CD4-positive, alpha-beta memory T cell (primary cell): ENCODE measurements at regions of chr4 and their contacts with region 1.

Region 1: DNA sequence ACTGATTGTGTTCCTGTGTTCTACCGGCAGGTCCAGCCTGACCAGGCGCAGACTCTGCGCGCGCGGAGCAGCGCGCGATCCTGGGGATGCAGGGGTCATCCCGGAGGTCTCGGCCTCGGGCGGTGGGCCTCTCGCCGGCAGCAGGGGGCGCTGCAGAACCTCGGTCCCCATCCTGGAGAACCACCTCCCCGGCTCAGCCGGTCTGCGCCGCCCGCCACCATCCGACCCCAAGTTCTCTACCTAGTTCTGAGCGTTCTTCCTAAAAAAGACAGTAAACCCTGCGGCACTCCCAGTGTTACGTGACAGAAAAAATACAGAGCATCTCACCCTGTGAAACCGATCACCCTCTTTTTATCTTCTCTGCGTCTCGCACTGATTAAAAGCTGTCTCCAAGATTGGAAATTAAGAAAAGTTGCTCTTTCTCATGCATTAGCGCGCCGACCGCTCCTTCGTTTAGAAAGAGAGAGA is 1.6 kb downstream of the TRPC3 start:
- DNase-seq: peak; percentile 74 to 82 (median 77)
- H3K4me3 ChIP-seq: peak overlapping the region; percentile 68 to 71
- H3K4me3 Mint-ChIP-seq: peak overlapping the region; percentile 83 to 96 (median 88)
- H3K27ac ChIP-seq: no peak overlapping the region
- H3K27ac Mint-ChIP-seq: peak overlapping the region in 6 of 7 donors; percentile 17 to 77 (median 53)
- H3K4me1 ChIP-seq: peaks cover 21% of the 10 kb centered on the region
- H3K4me1 Mint-ChIP-seq: peaks cover 7 to 23% (median 19%) of the 10 kb centered on the region in 4 donors
- H3K27me3 ChIP-seq: no peaks in the 10 kb centered on the region
- H3K27me3 Mint-ChIP-seq: peaks cover 0 to 12% of the 10 kb centered on the region in 2 donors

Region 2: GRCh38 chr4:121800961-121801714 is 149.1 kb before region 1 on chr4 and contains the start of gene EXOSC9:
- CTCF ChIA-PET with region 1: no interaction called
- POLR2A ChIA-PET with region 1: no interaction called
- intact Hi-C with region 1: loop called (anchors 2 kb)
- DNase-seq: peak; percentile 93 to 96 (median 93)
- H3K4me3 ChIP-seq: peak within 1 kb of the TSS; percentile 74 to 98
- H3K4me3 Mint-ChIP-seq: peak within 1 kb of the TSS; percentile 92 to 100 (median 96)
- H3K27ac ChIP-seq: peak within 1 kb of the TSS; percentile 88
- H3K27ac Mint-ChIP-seq: peak within 1 kb of the TSS; percentile 94 to 100 (median 99)
- H3K4me1 ChIP-seq: peaks cover 50% of the 10 kb centered on the region
- H3K4me1 Mint-ChIP-seq: peaks cover 29 to 52% (median 39%) of the 10 kb centered on the region in 4 donors
- H3K27me3 ChIP-seq: no peaks in the 10 kb centered on the region
- H3K27me3 Mint-ChIP-seq: peaks cover 0 to 3% of the 10 kb centered on the region in 2 donors
- total RNA-seq, gene EXOSC9: 43.0 to 45.4 TPM

Region 3: DNA sequence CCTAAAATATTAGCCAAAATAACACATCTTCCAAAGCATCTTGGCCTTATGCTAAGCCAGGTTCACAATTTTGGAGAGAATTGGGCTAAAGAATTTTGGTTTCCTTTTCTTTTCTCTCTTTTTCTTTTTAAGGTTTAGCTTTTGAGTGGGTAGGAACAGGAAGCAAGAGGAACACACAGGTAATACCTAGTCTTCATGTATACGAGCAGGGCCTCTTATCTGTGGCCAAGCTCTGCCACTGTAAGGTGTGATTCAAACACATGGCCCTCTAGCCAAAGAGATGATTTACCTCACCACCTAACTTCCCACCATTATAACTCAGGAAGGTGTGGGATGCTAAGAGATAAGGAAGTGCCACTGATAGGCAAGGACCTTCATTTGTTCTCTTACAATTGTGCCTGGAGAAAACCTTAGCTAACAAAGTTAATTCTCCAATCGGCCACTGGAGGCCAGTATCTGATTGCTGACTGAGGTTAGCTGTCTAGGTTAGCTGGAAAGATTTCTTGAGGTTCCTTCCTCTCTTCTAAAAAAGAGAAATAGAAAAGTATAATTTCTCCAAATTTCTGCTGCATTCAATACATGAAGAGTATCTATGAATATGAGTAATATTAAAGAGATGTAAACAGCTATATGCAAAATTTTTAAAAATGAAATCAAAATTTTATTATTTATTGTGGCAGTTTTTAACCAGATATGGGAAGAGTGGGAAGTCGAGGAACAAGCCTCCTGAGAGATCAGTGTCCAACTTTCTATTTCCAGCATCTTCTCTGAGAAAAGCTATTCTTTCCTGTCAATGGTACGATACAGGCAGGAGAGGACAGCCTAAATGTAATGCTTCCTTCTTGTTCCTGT is 49.9 kb before region 1 on chr4:
- CTCF ChIA-PET with region 1: interaction called, 16 read pairs
- POLR2A ChIA-PET with region 1: no interaction called
- intact Hi-C with region 1: no loop called
- DNase-seq: peak; percentile 44 to 57 (median 49)
- H3K4me3 ChIP-seq: no peak overlapping the region
- H3K4me3 Mint-ChIP-seq: no peak overlapping the region
- H3K27ac ChIP-seq: no peak overlapping the region
- H3K27ac Mint-ChIP-seq: no peak overlapping the region
- H3K4me1 ChIP-seq: no peaks in the 10 kb centered on the region
- H3K4me1 Mint-ChIP-seq: peaks cover 0 to 8% (median 4%) of the 10 kb centered on the region in 4 donors
- H3K27me3 ChIP-seq: no peaks in the 10 kb centered on the region
- H3K27me3 Mint-ChIP-seq: peaks cover 2 to 7% of the 10 kb centered on the region in 2 donors

Region 4: DNA sequence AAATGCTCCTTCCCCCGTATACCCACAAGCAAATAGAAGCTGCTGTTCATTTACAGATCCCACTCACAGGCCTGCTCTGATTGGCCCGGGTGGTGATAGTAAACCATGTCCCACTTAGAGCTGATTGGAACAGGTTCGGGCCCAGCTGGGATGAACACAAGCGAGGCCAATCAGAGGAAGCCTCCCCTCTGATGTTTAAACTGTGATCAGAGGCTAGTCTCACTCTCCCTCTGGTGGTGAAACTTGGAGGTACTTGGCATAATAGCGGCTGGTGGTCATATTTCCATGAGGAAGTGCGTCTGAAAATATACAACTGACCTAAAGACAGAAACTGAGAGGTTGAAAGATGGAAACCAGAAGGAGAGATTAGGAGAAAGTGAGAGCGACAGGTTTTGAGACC is 53.1 kb after region 1 on chr4:
- CTCF ChIA-PET with region 1: interaction called, 13 read pairs
- POLR2A ChIA-PET with region 1: no interaction called
- intact Hi-C with region 1: loop called (anchors 2 kb)
- DNase-seq: peak in 4 of 5 donors; percentile 3 to 33 (median 16)
- H3K4me3 ChIP-seq: no peak overlapping the region
- H3K4me3 Mint-ChIP-seq: no peak overlapping the region
- H3K27ac ChIP-seq: no peak overlapping the region
- H3K27ac Mint-ChIP-seq: no peak overlapping the region
- H3K4me1 ChIP-seq: no peaks in the 10 kb centered on the region
- H3K4me1 Mint-ChIP-seq: peaks cover 0 to 4% (median 0%) of the 10 kb centered on the region in 4 donors
- H3K27me3 ChIP-seq: no peaks in the 10 kb centered on the region
- H3K27me3 Mint-ChIP-seq: peaks cover 8 to 9% of the 10 kb centered on the region in 2 donors

Region 5: DNA sequence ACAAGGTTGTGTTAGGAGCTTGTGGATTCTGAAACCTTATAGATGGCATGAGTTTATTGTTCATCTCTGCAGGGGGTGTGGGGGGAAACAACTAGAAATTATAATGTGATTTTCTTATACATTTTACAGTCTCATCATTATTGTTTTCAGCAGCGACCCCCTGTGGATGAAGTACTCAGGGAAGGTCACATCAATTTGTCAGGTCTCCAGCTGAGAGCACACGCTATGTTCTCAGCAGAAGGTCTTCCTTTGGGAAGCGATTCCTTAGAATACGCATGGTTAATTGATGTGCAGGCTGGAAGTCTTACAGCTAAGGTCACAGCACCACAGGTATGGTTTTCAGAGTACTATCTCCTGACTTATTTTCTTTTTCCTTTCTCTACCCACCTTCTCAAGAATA is 274.1 kb after region 1 on chr4:
- CTCF ChIA-PET with region 1: interaction called, 3 read pairs
- POLR2A ChIA-PET with region 1: no interaction called
- intact Hi-C with region 1: loop called (anchors 2 kb)
- DNase-seq: no peak
- H3K4me3 ChIP-seq: no peak overlapping the region
- H3K4me3 Mint-ChIP-seq: no peak overlapping the region
- H3K27ac ChIP-seq: no peak overlapping the region
- H3K27ac Mint-ChIP-seq: peak overlapping the region in 2 of 7 donors; percentile 46 to 56
- H3K4me1 ChIP-seq: peaks cover 22% of the 10 kb centered on the region
- H3K4me1 Mint-ChIP-seq: peaks cover 13 to 23% (median 21%) of the 10 kb centered on the region in 4 donors
- H3K27me3 ChIP-seq: no peaks in the 10 kb centered on the region
- H3K27me3 Mint-ChIP-seq: no peaks in the 10 kb centered on the region

Region 6: GRCh38 chr4:122652379-122652778 is 702.1 kb after region 1 on chr4:
- CTCF ChIA-PET with region 1: no interaction called
- POLR2A ChIA-PET with region 1: no interaction called
- intact Hi-C with region 1: loop called (anchors 5 kb)
- DNase-seq: peak; percentile 40 to 52 (median 47)
- H3K4me3 ChIP-seq: no peak overlapping the region
- H3K4me3 Mint-ChIP-seq: no peak overlapping the region
- H3K27ac ChIP-seq: no peak overlapping the region
- H3K27ac Mint-ChIP-seq: no peak overlapping the region
- H3K4me1 ChIP-seq: no peaks in the 10 kb centered on the region
- H3K4me1 Mint-ChIP-seq: no peaks in the 10 kb centered on the region
- H3K27me3 ChIP-seq: no peaks in the 10 kb centered on the region
- H3K27me3 Mint-ChIP-seq: no peaks in the 10 kb centered on the region

Region 7: DNA sequence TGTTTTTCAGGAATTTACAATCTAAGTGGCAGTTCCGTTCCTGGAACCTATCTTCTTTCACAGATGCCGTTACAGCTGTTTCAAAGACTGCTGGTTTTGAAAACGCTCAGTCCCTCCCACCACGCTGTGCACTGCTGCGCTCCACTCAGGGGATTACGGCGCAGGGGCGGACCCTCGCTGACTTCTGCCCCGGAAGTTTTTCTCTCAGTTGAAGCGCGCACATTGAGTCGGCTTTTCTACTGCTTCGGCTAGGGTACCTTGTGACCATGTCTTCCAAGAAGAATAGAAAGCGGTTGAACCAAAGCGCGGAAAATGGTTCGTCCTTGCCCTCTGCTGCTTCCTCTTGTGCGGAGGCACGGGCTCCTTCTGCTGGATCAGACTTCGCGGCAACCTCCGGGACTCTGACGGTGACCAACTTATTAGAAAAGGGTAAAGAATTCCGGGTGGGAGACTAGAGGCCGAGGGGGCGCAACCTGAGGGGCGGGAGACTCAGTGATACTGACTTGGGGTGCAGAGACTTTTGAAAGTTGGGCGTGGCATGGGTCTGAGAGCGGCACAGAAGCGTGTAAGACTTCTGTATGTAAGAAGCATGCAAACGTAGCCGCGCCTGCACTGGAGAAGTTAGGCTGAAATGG is 972.7 kb after region 1 on chr4:
- CTCF ChIA-PET with region 1: no interaction called
- POLR2A ChIA-PET with region 1: no interaction called
- intact Hi-C with region 1: loop called (anchors 2 kb)
- DNase-seq: peak; percentile 83 to 90 (median 85)
- H3K4me3 ChIP-seq: peak overlapping the region; percentile 92 to 94
- H3K4me3 Mint-ChIP-seq: peak overlapping the region in 5 of 8 donors; percentile 93 to 100 (median 99)
- H3K27ac ChIP-seq: peak overlapping the region; percentile 66
- H3K27ac Mint-ChIP-seq: peak overlapping the region; percentile 90 to 99 (median 98)
- H3K4me1 ChIP-seq: peaks cover 28% of the 10 kb centered on the region
- H3K4me1 Mint-ChIP-seq: peaks cover 0 to 14% (median 6%) of the 10 kb centered on the region in 4 donors
- H3K27me3 ChIP-seq: no peaks in the 10 kb centered on the region
- H3K27me3 Mint-ChIP-seq: no peaks in the 10 kb centered on the region